Calu3 (cell line): ENCODE measurements at regions of chr3 and their contacts with region 1.

Region 1: DNA sequence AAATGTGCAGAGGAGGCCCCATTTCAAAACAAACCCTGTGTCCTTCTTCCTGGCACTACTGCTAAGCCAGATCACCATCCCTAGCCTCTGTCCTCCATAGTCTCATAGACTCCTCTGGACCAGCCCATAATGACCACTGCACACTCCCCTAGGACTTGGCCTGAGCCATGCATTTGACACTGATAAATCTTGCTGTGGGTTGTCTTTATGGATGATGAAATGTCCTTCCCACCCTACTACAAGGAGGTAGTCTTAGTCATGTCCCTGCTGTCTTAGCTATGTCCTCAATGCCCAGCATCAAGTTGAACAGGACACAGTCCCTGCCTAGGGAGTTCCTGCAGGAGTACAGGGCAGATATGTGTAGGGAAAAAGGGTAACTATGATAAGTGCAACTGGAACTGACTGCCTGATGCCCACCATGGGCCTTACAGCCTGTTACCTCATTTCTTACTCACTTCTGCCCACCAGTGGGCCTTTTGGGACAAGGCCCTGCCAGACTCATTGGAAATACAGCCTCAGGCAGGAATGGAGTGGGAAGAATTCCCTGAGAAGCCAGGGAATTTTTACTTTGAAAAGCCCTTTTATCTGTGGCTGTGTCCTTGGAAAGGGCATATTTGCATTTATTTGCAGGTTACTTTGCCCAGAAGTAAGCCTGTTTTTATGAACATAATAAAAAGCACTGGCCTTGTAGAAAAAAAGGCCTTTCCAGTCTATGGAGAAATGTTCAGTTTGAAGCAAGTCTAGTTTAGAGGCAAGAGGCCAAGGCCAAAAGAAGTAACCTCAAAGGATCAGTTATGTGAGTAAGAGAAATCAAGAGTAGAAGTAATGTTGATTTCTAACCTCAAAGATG is 199.6 kb upstream of the EIF1B start:
- DNase-seq: no peak
- H3K4me3 Mint-ChIP-seq: no peak overlapping the region
- H3K27ac Mint-ChIP-seq: no peak overlapping the region
- H3K4me1 Mint-ChIP-seq: peaks cover 20% of the 10 kb centered on the region
- H3K27me3 Mint-ChIP-seq: no peaks in the 10 kb centered on the region
- CTCF ChIP-seq: no peak

Region 2: DNA sequence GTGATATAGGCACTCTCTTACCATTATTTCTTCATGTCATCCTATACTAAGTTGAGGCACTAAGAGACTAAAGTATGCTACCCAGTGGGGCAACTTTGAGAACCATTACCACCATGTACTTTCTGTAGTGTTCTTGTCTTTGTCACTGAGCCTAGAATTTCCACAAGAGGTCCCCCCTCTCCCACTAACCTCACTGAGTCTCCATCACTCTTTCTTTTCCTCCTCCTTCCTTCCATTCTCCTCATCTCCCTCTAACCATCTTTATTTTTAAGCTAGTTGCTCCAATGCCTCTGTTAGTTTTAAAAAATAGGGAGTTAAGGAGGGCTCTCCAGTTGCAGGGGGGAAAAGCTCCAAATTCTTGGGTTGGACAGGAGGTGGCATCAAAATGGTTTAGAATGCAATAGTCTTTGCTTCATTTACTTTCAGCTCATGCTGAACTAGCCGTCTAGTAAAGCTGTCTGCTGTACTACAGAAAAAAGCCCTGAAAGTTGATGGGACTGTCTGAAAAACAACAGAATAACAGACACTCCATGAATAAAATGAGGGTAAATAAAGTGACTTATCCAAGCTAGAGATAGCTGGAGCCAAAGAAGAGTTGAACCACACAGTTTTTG is 385.5 kb before region 1 on chr3:
- CTCF ChIA-PET with region 1: no interaction called
- intact Hi-C with region 1: loop called (anchors 10 kb)
- DNase-seq: peak; percentile 29
- H3K4me3 Mint-ChIP-seq: no peak overlapping the region
- H3K27ac Mint-ChIP-seq: no peak overlapping the region
- H3K4me1 Mint-ChIP-seq: no peaks in the 10 kb centered on the region
- H3K27me3 Mint-ChIP-seq: no peaks in the 10 kb centered on the region
- CTCF ChIP-seq: no peak